Ovary (tissue), 10 donors: ENCODE measurements at regions of chr19 and their contacts with region 1.

Region 1: DNA sequence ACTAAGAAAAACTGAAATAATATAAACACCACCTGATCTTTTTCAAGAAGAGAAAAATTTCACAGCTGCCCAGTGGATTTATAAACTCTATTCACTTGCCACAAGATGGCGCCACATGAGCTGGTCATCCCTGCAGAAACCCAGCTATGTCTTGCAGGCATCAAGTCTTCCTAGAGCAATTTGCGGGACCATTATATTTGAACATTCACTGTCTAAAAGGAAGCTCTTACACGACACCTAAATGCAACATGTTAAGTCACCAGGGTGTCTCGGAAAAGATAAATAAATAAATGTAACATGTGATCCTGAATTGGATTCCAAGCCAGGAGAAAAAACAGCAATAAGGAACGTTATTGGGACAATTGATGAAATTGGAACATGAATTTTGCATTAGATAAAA is 20.3 kb upstream of the AKT2 start:
- DNase-seq: peak; percentile 76 to 88 (median 81)
- H3K4me3 ChIP-seq: no peak overlapping the region
- H3K27ac ChIP-seq: no peak overlapping the region
- H3K4me1 ChIP-seq: no peaks in the 10 kb centered on the region
- H3K27me3 ChIP-seq: no peaks in the 10 kb centered on the region
- CTCF ChIP-seq: peak in 2 of 3 donors; percentile 61 to 64
- EP300 ChIP-seq: no peak
- POLR2A ChIP-seq: no peak

Region 2: DNA sequence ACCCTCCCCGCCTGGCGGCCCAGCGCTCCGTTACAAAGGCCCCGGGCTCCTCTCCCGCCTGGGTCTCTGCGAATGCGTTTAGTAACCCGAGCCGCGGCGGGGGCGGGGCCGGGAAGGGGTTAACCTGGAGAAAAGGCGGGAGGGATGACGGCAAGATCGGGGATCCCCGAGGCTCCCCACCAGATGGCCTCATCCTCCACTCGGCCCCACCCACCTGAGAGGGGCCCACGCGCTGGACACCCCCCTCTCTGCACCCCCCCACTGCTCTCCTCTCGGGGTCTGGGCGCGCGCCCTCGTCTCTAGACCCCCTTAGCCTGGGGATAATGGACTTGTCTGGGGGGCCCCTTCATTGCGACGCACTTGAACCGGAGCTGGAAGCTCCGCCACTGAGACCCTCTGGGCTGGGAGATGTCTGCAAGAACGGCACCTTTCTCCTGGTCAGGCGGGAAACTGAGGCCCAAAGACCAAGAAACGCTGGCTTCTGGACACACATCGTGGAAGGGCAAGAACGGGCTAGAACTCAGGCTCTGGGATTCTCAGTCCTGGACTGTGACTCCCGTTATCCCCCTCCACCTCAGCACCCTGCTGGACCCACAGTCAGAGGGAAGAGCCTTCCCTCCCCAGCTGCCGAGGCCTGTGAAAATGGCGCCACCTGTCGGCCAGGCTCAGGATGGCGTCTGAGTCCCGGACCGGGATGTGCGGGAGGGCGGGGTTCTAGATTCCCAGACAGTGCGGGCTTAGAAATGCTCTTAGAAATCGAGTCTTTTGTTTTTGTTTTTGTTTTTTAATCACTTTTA is 292.9 kb after region 1 on chr19:
- intact Hi-C with region 1: loop called in 2 of 4 experiments (anchors 10 kb)
- DNase-seq: peak; percentile 87 to 95 (median 94)
- H3K4me3 ChIP-seq: peak overlapping the region; percentile 38
- H3K27ac ChIP-seq: peak overlapping the region; percentile 63 to 70
- H3K4me1 ChIP-seq: peaks cover 4% of the 10 kb centered on the region
- H3K27me3 ChIP-seq: no peaks in the 10 kb centered on the region
- CTCF ChIP-seq: peak; percentile 97 to 98 (median 98)
- EP300 ChIP-seq: no peak
- POLR2A ChIP-seq: peak; percentile 54

Region 3: DNA sequence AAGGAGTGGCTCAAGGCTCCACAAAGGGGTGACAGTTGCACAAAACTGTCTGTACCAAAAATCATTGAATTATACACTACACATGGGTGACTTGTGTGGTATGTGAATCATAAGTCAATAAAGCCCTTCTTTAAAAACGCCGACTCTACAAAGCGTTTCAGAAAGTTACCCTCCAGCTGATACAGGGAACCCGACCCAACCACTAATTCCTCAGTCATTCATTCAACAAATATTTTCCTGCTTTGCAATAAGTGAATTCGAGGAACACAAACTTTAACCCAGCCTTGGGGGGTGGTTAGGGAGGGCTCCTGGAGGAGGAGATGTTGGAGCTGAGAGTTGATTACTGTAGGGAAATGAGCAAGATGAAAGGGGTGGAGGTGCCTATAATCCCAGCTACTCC is 327.8 kb after region 1 on chr19:
- intact Hi-C with region 1: loop called in 2 of 4 experiments (anchors 10 kb)
- DNase-seq: no peak
- H3K4me3 ChIP-seq: no peak overlapping the region
- H3K27ac ChIP-seq: no peak overlapping the region
- H3K4me1 ChIP-seq: no peaks in the 10 kb centered on the region
- H3K27me3 ChIP-seq: no peaks in the 10 kb centered on the region
- CTCF ChIP-seq: no peak
- EP300 ChIP-seq: no peak
- POLR2A ChIP-seq: no peak